Head of caudate nucleus (tissue), 42 donors: ENCODE measurements at regions of chr12 and their contacts with region 1.

Region 1: DNA sequence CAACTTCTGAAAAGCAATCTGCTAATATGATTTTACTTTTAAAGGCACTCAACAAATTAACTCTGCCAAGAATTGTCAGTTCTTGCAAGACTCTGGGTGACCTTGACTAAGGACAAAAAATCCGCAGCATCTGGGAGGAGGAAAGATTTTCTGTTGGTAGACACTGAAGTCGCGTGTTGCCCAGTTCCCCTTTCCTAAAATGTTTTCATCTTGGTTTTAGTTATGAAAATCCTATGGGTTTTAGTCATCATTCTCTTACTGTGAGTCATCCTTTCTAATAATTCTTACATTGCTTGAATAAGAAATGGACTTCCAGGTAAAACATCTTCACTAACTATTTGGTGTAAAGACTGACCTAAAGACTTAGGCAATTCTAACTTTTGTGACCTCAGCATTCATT is 9.1 kb downstream of the GSG1 start:
- DNase-seq: no peak

Region 2: GRCh38 chr12:12916135-12916944 is 178.0 kb before region 1 on chr12:
- intact Hi-C with region 1: loop called (anchors 10 kb)
- DNase-seq: peak; percentile 77 to 98 (median 94)

Region 3: DNA sequence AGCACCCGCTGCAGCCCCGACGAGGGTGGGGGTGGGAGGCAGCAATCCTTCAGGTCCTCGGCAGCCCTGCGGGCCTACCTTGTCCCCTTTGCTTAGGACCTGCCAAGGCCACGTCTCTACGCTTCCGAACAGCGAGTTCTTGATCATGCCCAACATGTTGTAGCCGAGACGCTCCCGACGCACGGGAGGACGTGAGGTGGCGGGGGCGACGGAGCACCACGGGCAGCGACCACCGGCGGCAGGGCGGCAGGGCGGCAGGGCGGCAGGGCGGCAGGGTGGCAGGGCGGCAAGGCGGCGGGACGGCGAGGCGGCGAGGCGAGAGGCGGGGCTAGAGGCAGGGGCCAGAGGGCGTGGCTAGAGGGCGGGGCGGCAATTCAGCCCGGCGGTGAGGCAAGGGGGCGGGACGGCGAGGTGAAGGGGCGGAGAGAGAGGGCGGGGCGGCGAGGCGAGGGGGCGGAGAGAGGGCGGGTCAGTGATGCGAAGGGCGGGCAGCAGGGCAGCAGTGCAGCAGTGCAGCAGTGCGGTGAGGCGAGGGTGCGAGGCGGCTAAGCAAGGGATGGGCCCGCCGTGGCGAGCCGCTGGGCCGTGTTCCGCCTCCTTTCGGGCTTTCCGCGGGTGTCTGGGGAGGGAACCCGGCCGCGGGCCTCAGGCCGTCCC is 94.3 kb before region 1 on chr12 and contains the start of gene HEBP1:
- intact Hi-C with region 1: loop called (anchors 10 kb)
- DNase-seq: peak; percentile 87 to 100 (median 98)

Region 4: DNA sequence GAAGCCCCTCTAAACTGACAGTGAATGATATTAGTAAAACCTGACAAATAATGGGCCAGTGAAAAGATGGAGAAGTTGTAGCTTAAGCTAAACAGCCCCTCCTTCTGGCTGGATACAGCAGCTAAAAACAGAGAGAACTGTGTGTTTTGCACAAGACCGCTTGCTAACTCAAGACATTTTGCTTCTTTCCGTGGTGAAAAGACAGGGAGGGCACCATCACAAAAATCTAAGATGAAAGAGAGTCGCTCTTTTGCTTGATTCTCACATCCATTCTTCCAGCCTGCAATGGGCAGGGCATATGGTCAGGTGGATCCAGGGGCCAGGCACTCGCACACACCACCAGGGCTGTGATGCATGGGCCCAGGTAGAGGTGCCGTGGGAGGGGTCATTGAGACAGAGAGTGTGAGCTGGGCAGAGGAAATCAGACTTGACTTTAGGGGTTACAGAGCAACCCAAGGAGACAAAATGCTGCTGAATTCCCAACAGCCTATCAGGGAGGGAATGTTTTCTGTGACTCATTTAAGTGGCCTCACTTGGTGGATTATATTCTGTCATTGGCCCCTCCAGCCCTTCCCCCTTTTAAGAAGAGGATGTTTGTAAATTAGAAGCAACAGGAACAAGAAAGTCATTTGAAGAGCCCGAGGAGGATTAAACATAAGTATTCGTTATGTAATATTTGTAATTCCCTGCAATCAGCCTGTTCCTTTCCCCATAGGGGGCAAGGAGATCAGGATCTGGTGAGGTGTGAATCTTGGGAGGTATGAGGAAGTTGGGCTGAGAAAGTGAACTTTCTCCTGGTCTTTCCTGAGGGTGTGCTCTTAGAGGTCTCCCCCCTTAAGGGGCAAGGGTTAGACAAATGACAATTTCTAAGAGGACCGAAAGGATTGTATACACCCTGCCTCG is 114.4 kb after region 1 on chr12:
- intact Hi-C with region 1: loop called (anchors 2 kb)
- DNase-seq: peak in 12 of 42 donors; percentile 18 to 69 (median 34)